ENCODE measurements at regions of chr3 and their contacts with region 1.

Region 1: DNA sequence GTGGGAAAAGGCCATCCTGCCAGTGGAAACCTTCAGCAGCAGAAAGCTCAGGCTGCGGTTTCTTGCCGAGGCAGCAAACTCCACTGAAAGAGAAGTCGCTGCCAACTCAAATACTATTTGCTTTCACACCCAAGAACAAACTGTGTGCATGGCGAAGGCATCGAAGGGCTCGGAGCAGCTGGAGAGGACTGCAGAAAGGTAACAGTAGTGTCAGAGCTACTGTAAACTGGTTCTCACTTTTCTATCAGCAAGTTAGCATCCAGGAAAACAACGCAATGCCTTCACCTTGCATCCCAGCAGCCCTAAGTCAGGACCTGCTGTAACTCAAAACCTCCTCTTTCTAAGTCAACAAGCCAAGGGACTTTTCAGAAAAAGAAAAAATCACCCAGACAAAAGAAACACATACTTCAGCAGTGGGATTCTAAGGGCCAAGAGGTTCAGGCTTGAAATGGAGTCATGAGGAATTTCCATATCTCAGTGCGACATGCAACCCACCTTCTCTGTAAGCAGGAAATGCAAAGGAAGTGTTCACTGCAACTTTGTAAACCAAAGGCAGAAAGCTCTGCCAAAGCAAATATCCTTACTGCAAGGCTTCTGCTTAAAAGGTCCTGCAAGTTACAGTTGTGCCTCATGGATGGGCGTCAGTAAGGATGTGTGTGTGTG is 193.5 kb downstream of the FOXP1 start:
- DNase-seq: peak in 11 of 14 experiments; percentile 10 to 63 (median 38)
- ATAC-seq: peak; percentile 58
- H3K4me3 ChIP-seq: peak overlapping the region; percentile 33
- H3K4me3 Mint-ChIP-seq: peak overlapping the region; percentile 87
- H3K27ac ChIP-seq: peak overlapping the region; percentile 27 to 84
- H3K27ac Mint-ChIP-seq: peak overlapping the region; percentile 100
- H3K4me1 ChIP-seq: peaks cover 35% of the 10 kb centered on the region
- H3K4me1 Mint-ChIP-seq: peaks cover 81% of the 10 kb centered on the region
- H3K27me3 ChIP-seq: no peaks in the 10 kb centered on the region
- H3K27me3 Mint-ChIP-seq: no peaks in the 10 kb centered on the region
- CTCF ChIP-seq: no peak

Region 2: DNA sequence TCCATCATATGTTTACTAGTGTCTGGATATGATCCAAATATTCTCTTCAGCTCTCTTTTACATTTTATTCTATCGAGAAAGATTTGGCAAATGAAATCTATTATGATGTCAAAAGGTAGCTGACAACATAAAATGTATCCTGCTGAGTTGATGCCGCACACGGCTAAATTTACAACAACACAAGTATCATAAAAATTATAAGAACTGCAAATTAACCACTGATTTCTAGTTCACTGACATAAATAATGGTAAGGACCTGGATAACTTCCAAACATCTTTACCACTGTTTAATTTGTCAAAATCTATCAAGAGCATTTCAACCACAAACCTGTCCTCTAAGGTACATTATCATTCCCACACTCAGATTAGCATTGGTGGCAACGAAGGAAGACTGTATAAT is 51.0 kb before region 1 on chr3:
- CTCF ChIA-PET with region 1: interaction called, 4 read pairs
- POLR2A ChIA-PET with region 1: no interaction called
- intact Hi-C with region 1: loop called in 1 of 2 experiments (anchors 5 kb)
- DNase-seq: no peak
- ATAC-seq: no peak
- H3K4me3 ChIP-seq: no peak overlapping the region
- H3K4me3 Mint-ChIP-seq: no peak overlapping the region
- H3K27ac ChIP-seq: no peak overlapping the region
- H3K27ac Mint-ChIP-seq: peak overlapping the region; percentile 73
- H3K4me1 ChIP-seq: no peaks in the 10 kb centered on the region
- H3K4me1 Mint-ChIP-seq: peaks cover 55% of the 10 kb centered on the region
- H3K27me3 ChIP-seq: no peaks in the 10 kb centered on the region
- H3K27me3 Mint-ChIP-seq: no peaks in the 10 kb centered on the region
- CTCF ChIP-seq: no peak

Region 3: DNA sequence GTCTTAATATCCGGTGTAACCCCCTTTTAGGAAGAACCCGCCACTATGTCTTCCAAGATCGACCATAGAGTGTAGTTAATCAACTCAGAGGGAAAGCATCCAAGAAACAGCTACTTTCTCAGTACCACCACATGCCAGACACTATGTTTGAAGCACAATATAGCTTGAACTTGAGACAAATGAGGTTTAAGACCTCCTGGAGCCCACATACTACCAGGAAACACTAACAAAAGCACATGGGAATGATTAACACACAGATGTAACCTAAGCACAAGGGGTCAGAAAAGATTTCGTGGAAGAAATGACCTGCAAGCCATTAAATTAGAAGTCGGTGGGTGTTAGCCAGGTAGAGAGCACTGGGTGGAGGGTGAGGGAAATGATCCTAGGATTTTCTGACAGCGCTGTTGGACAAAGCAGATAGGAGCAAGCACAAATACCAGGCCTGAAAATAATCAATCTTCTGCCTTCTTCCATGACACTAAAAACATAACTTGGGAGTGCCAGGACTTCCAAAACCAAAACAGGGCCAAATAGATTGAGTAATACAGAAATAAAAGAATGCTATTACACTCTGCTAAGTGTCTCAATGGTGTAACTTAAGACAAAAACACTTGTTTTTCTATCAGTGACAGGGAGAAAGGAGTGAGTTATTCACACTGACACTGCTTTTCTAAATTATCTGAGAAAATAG is 20.2 kb before region 1 on chr3:
- CTCF ChIA-PET with region 1: interaction called, 3 read pairs
- POLR2A ChIA-PET with region 1: interaction called, 8 read pairs
- intact Hi-C with region 1: loop called in 1 of 2 experiments (anchors 1 kb)
- DNase-seq: no peak
- ATAC-seq: no peak
- H3K4me3 ChIP-seq: no peak overlapping the region
- H3K4me3 Mint-ChIP-seq: no peak overlapping the region
- H3K27ac ChIP-seq: no peak overlapping the region
- H3K27ac Mint-ChIP-seq: peak overlapping the region; percentile 87
- H3K4me1 ChIP-seq: peaks cover 41% of the 10 kb centered on the region
- H3K4me1 Mint-ChIP-seq: peaks cover 82% of the 10 kb centered on the region
- H3K27me3 ChIP-seq: no peaks in the 10 kb centered on the region
- H3K27me3 Mint-ChIP-seq: no peaks in the 10 kb centered on the region
- CTCF ChIP-seq: no peak

Measured in CD4-positive, alpha-beta T cell (primary cell).